ENCODE measurements at regions of chr6 and their contacts with region 1.

Region 1: DNA sequence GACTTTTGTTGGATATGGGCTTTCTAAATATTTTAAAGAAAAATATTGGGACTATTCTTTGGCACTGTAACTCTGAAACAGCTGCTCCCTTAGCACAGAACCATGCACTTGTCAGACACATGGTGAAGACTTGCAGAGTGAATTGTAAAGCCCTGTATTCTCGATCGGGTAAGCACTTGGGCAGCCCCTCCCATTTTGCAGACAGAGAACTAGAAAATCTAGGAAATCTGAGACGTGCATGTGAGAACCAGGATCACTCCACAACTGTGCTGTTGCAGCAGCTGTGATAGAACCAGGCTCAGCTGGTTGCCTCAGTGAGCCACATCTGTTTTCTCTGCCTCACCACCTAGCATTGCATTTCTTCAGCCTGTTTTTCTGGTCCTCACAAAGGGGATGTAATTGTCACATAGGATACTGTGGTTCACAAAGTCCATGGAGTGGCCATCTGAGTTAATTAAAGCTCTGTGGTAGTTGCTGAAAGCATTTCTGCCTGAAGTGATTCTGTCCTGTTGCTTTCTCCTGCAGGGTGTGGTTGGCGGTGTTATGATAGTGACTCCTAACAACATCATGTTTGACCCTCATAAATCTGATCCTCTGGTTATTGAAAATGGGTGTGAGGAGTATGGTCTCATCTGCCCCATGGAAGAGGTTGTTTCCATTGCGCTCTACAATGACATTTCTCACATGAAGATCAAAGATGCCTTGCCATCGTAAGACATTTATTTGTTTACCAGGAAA is 71.8 kb upstream of the HINT3 start:
- DNase-seq: no peak
- ATAC-seq: no peak
- H3K4me3 ChIP-seq: no peak overlapping the region
- H3K4me3 Mint-ChIP-seq: no peak overlapping the region
- H3K27ac ChIP-seq: no peak overlapping the region
- H3K27ac Mint-ChIP-seq: no peak overlapping the region
- H3K4me1 ChIP-seq: no peaks in the 10 kb centered on the region
- H3K4me1 Mint-ChIP-seq: peaks cover 0 to 2% (median 0%) of the 10 kb centered on the region in 3 donors
- H3K27me3 ChIP-seq: no peaks in the 10 kb centered on the region
- H3K27me3 Mint-ChIP-seq: no peaks in the 10 kb centered on the region

Region 2: GRCh38 chr6:125846292-125847024 is 38.3 kb before region 1 on chr6:
- CTCF ChIA-PET with region 1: no interaction called
- POLR2A ChIA-PET with region 1: no interaction called
- DNase-seq: no peak
- ATAC-seq: no peak
- H3K4me3 ChIP-seq: no peak overlapping the region
- H3K4me3 Mint-ChIP-seq: no peak overlapping the region
- H3K27ac ChIP-seq: no peak overlapping the region
- H3K27ac Mint-ChIP-seq: no peak overlapping the region
- H3K4me1 ChIP-seq: no peaks in the 10 kb centered on the region
- H3K4me1 Mint-ChIP-seq: peaks cover 11 to 22% (median 22%) of the 10 kb centered on the region in 3 donors
- H3K27me3 ChIP-seq: no peaks in the 10 kb centered on the region
- H3K27me3 Mint-ChIP-seq: no peaks in the 10 kb centered on the region

Region 3: GRCh38 chr6:125931733-125932450 is 47.1 kb after region 1 on chr6:
- CTCF ChIA-PET with region 1: interaction called in 1 of 2 experiments, 11 read pairs
- POLR2A ChIA-PET with region 1: no interaction called
- DNase-seq: no peak
- ATAC-seq: no peak
- H3K4me3 ChIP-seq: no peak overlapping the region
- H3K4me3 Mint-ChIP-seq: no peak overlapping the region
- H3K27ac ChIP-seq: no peak overlapping the region
- H3K27ac Mint-ChIP-seq: no peak overlapping the region
- H3K4me1 ChIP-seq: no peaks in the 10 kb centered on the region
- H3K4me1 Mint-ChIP-seq: no peaks in the 10 kb centered on the region
- H3K27me3 ChIP-seq: no peaks in the 10 kb centered on the region
- H3K27me3 Mint-ChIP-seq: no peaks in the 10 kb centered on the region